Body of pancreas (tissue), 4 donors: ENCODE measurements at regions of chr13 and their contacts with region 1.

Region 1: DNA sequence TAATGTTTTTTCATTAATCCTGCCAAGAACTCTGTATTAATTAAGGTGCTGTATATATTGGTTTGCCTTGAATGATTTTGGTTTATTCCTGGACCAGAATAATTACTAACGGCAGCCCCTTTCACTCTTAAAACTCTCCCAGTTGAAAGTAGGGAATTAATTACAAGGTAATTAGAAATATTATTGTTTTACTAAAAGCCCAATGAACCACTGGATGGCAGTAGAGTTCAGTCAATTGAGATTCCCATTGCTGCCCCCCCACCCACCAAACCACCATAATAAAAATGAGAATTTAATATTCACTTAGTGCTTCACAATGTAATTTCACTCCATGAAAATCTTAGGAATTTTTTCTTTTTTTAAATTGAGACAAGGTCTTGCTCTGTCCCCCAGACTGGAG is 13.7 kb downstream of the WBP4 start:
- DNase-seq: peak in 2 of 4 donors; percentile 41
- ATAC-seq: no peak
- H3K4me3 ChIP-seq: no peak overlapping the region
- H3K27ac ChIP-seq: no peak overlapping the region
- H3K4me1 ChIP-seq: no peaks in the 10 kb centered on the region
- H3K27me3 ChIP-seq: no peaks in the 10 kb centered on the region
- CTCF ChIP-seq: peak; percentile 19 to 67 (median 58)
- POLR2A ChIP-seq: no peak

Region 2: GRCh38 chr13:41216160-41216559 is 141.1 kb after region 1 on chr13:
- intact Hi-C with region 1: loop called (anchors 10 kb)
- DNase-seq: no peak
- ATAC-seq: no peak
- H3K4me3 ChIP-seq: no peak overlapping the region
- H3K27ac ChIP-seq: no peak overlapping the region
- H3K4me1 ChIP-seq: no peaks in the 10 kb centered on the region
- H3K27me3 ChIP-seq: no peaks in the 10 kb centered on the region
- CTCF ChIP-seq: no peak
- POLR2A ChIP-seq: no peak